ENCODE measurements at regions of chr1 and their contacts with region 1.

Region 1: DNA sequence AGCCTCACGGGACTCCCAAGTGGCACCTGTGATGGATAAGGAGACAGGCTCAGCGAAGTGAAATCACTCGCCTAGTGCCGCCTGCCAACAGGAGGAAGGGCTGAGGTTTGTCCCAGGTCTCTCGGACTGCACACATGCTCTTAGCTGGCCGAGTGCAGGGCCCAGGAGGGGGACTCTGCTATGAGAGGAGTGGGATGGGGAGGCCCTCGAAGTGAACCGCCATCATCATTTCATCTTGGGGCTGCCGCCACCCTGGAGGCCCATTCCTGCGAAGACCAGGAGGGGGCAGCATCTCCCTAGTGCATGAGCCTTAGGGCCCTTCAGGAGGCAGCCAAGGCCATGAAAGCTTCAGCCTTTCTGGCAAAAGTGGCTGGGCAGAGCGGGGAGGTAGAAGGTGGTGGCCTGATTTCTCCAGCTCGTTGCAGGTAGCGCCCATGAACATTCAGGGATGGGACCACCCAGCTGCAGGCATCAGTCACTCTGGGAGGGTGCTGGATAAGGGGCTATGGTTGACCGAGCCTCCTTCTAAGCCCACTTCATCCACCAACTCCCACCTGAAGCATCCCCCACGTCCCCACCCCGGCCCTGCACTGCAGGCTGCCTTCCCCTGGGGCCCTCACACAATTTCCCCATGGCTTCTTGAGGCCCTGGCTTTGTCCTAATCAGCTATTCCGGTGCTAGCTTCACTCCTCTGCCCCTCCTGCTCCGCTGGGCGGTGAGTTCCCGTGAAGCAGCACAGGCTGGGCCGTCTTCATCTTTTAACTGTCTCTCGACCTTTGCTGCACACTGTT is 17.2 kb upstream of the RASSF5 start:
- DNase-seq: peak; percentile 93

Region 2: DNA sequence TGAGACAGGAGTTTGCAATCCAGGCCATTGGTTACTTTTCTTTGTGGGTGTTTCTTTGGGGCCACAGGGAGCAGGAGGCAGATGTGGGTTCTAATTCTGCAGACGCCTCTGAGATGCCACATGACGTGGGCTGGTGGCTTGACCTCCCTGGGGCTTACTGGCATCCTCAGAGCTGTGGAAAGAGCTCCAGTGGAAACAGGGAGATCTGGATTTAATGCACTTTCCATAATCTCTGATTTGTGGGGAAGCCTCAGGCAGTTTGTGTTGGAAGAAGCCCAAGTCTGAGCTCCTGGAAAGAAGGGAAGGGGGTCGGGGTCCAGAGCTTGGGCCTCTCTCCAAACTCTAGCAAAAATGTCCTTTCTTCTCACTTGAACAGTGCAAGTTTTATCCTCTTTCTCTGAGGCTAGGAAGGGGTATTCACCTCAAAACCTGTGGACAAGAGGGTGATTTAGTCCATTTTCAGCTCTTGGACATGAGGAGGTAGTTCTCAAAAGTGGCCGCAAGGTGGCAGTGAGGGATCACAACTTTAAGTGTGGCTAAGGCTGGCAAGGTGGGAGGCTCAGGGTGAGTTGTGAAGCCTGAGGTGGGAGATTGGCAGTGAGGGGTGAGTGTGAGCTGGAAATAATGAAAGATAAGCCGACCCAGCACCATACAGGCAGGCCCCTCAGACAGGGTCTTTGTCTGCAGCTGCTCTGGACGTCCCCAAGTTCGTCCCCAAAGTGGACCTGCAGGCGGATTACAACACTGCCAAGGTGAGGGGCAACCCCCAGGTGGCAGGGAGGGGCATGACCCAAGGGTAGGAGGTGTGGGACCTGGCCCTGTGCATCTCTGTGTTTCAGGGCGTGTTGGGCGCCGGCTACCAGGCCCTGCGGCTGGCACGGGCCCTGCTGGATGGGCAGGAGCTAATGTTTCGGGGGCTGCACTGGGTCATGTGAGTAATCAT is 10.7 kb before region 1 on chr1:
- CTCF ChIA-PET with region 1: interaction called, 10 read pairs
- POLR2A ChIA-PET with region 1: no interaction called
- DNase-seq: peak; percentile 89

Region 3: DNA sequence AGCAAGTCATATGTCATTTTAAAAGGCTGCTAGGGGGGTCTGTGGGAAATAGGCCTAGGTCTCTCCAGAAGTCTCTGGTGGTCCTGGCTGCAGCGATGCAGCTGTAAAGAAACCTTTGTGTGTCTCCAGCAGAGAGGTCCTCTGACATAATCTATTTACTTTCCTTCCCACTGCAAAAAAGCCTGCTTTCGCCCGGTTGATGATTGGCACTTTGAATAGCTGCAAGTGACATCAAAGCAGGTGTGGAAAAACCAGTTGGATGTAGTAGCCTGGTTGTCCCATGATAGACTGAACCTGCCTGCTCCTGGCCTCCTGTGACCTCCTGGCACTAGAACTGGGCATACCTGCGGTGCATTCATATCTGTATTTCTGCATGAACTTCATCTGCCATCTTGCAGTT is 31.0 kb after region 1 on chr1:
- CTCF ChIA-PET with region 1: no interaction called
- POLR2A ChIA-PET with region 1: no interaction called
- DNase-seq: no peak

Measured in HEK293T (cell line).